ENCODE measurements at regions of chr18 and their contacts with region 1.

Region 1: GRCh38 chr18:13800505-13801259 is 23.3 kb upstream of the MC5R start:
- DNase-seq: peak in 8 of 9 experiments; percentile 8 to 59 (median 27)
- ATAC-seq: peak; percentile 44
- H3K4me3 ChIP-seq: no peak overlapping the region
- H3K4me3 Mint-ChIP-seq: peak overlapping the region; percentile 49
- H3K27ac ChIP-seq: no peak overlapping the region
- H3K27ac Mint-ChIP-seq: no peak overlapping the region
- H3K4me1 ChIP-seq: no peaks in the 10 kb centered on the region
- H3K4me1 Mint-ChIP-seq: peaks cover 5% of the 10 kb centered on the region
- H3K27me3 ChIP-seq: peaks cover 4 to 6% of the 10 kb centered on the region in 2 experiments
- H3K27me3 Mint-ChIP-seq: peaks cover 56% of the 10 kb centered on the region
- CTCF ChIP-seq: no peak

Region 2: GRCh38 chr18:12883684-12884405 is 916.8 kb before region 1 on chr18 and contains the start of gene PTPN2:
- CTCF ChIA-PET with region 1: no interaction called
- POLR2A ChIA-PET with region 1: no interaction called
- intact Hi-C with region 1: no loop called
- DNase-seq: peak; percentile 78 to 98 (median 91)
- ATAC-seq: peak; percentile 86
- H3K4me3 ChIP-seq: peak within 1 kb of the TSS; percentile 77 to 95
- H3K4me3 Mint-ChIP-seq: peak within 1 kb of the TSS; percentile 88
- H3K27ac ChIP-seq: peak within 1 kb of the TSS; percentile 99 to 100
- H3K27ac Mint-ChIP-seq: peak within 1 kb of the TSS; percentile 94
- H3K4me1 ChIP-seq: peaks cover 49% of the 10 kb centered on the region
- H3K4me1 Mint-ChIP-seq: peaks cover 58% of the 10 kb centered on the region
- H3K27me3 ChIP-seq: no peaks in the 10 kb centered on the region
- H3K27me3 Mint-ChIP-seq: no peaks in the 10 kb centered on the region
- CTCF ChIP-seq: no peak
- total RNA-seq, gene PTPN2: 61.7 to 62.8 TPM

Region 3: DNA sequence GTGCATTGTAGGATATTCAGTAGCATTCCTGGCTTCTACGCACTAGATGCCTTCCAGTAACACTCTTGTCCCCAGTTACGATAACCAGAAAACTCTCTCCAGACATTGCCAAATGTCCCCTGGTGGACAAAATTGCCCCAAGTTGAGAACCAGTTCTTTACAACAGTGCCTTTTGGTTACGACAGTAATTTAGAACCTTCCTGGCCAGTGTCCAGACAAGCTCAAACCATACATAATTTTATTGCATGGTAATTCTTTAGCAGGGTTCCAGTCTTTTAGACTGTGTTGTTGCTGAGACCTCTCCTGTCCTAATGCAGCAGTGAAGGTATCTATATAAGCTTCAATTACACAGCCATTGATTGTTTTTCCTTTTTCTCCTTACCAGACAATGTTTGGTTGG is 54.0 kb before region 1 on chr18:
- CTCF ChIA-PET with region 1: no interaction called
- POLR2A ChIA-PET with region 1: no interaction called
- intact Hi-C with region 1: loop called in 1 of 2 experiments (anchors 10 kb)
- DNase-seq: no peak
- ATAC-seq: no peak
- H3K4me3 ChIP-seq: no peak overlapping the region
- H3K4me3 Mint-ChIP-seq: no peak overlapping the region
- H3K27ac ChIP-seq: no peak overlapping the region
- H3K27ac Mint-ChIP-seq: no peak overlapping the region
- H3K4me1 ChIP-seq: no peaks in the 10 kb centered on the region
- H3K4me1 Mint-ChIP-seq: no peaks in the 10 kb centered on the region
- H3K27me3 ChIP-seq: no peaks in the 10 kb centered on the region
- H3K27me3 Mint-ChIP-seq: no peaks in the 10 kb centered on the region
- CTCF ChIP-seq: no peak

Region 4: GRCh38 chr18:13813271-13813849 is 12.7 kb after region 1 on chr18:
- CTCF ChIA-PET with region 1: interaction called, 23 read pairs
- POLR2A ChIA-PET with region 1: no interaction called
- intact Hi-C with region 1: no loop called
- DNase-seq: peak in 8 of 9 experiments; percentile 18 to 67 (median 54)
- ATAC-seq: peak; percentile 72
- H3K4me3 ChIP-seq: no peak overlapping the region
- H3K4me3 Mint-ChIP-seq: no peak overlapping the region
- H3K27ac ChIP-seq: no peak overlapping the region
- H3K27ac Mint-ChIP-seq: no peak overlapping the region
- H3K4me1 ChIP-seq: no peaks in the 10 kb centered on the region
- H3K4me1 Mint-ChIP-seq: no peaks in the 10 kb centered on the region
- H3K27me3 ChIP-seq: no peaks in the 10 kb centered on the region
- H3K27me3 Mint-ChIP-seq: no peaks in the 10 kb centered on the region
- CTCF ChIP-seq: peak; percentile 82

Measured in CD8-positive, alpha-beta T cell (primary cell).